Activated CD4-positive, alpha-beta T cell treated with anti-CD3 and anti-CD28 coated beads, Interleukin-2, amount 10 ng/mL, durations not matched to agents 24 days and 14 days (primary cell): ENCODE measurements at regions of chr6 and their contacts with region 1.

Region 1: GRCh38 chr6:160462551-160463109 is 114.5 kb downstream of the SLC22A3 start:
- DNase-seq: peak; percentile 94
- H3K4me3 Mint-ChIP-seq: peak overlapping the region; percentile 72
- H3K27ac Mint-ChIP-seq: peak overlapping the region; percentile 74
- H3K4me1 Mint-ChIP-seq: peaks cover 56% of the 10 kb centered on the region
- H3K27me3 Mint-ChIP-seq: peaks cover 27% of the 10 kb centered on the region

Region 2: DNA sequence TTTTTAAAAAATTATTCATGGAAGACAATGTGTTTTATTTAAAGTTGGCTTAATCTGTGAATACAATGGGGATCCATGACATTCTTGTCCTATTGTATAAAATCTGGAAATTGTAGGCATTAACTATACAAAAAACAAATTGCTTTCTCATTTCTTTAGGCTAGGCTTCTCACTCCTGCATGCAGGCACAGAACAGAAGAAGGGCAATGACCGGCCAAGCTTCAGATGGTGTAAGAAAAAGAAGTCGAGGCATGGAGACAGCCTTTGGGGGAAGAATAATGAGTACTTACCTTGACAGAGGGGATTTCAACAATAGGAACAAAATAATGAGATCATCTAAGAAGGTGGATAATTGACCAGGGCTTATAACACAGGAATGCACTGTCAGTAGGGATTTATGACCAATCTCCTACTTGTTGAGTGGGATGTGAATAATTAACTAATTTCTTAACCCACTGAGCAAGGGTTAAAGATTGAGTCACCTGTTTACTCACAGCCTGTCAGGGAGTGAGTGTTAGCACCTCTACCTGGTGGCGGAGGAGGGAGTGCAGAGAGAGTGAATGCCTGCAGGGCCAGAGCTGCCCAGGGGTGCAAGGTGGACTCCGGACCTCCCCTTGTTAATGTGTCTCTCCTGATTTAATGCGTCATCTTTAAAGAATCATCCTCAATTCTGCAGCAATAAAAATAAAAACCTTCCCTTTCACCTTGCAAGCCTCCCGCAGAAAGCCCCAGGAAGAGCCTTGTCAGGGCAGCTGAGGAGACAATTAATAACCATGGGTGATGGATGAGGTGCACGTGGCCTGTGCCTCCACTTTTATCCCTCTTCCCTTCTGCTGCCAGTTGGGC is 207.9 kb before region 1 on chr6:
- intact Hi-C with region 1: no loop called
- DNase-seq: no peak
- H3K4me3 Mint-ChIP-seq: no peak overlapping the region
- H3K27ac Mint-ChIP-seq: no peak overlapping the region
- H3K4me1 Mint-ChIP-seq: peaks cover 2% of the 10 kb centered on the region
- H3K27me3 Mint-ChIP-seq: peaks cover 4% of the 10 kb centered on the region

Region 3: DNA sequence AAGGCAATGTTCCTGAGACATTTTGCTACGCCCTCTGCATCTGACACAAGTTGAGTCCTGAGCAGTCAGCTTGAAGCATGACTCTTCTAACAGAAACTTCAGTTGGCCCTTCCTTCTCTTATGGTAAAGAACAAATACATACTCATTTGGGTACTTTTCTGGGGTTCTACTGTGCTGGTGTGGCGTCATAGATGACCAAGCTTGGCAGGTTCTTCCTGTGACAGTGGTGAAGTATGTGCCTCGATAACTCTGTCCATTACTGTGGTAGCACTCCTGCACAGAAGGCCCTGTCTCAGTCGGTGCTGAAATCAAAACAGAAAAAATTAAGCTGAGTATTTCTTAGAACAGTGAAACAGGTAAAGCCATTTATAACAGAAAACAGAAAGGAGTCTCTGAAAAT is 38.0 kb after region 1 on chr6:
- intact Hi-C with region 1: loop called (anchors 1 kb)
- DNase-seq: peak; percentile 58
- H3K4me3 Mint-ChIP-seq: no peak overlapping the region
- H3K27ac Mint-ChIP-seq: peak overlapping the region; percentile 52
- H3K4me1 Mint-ChIP-seq: peaks cover 1% of the 10 kb centered on the region
- H3K27me3 Mint-ChIP-seq: peaks cover 18% of the 10 kb centered on the region

Region 4: DNA sequence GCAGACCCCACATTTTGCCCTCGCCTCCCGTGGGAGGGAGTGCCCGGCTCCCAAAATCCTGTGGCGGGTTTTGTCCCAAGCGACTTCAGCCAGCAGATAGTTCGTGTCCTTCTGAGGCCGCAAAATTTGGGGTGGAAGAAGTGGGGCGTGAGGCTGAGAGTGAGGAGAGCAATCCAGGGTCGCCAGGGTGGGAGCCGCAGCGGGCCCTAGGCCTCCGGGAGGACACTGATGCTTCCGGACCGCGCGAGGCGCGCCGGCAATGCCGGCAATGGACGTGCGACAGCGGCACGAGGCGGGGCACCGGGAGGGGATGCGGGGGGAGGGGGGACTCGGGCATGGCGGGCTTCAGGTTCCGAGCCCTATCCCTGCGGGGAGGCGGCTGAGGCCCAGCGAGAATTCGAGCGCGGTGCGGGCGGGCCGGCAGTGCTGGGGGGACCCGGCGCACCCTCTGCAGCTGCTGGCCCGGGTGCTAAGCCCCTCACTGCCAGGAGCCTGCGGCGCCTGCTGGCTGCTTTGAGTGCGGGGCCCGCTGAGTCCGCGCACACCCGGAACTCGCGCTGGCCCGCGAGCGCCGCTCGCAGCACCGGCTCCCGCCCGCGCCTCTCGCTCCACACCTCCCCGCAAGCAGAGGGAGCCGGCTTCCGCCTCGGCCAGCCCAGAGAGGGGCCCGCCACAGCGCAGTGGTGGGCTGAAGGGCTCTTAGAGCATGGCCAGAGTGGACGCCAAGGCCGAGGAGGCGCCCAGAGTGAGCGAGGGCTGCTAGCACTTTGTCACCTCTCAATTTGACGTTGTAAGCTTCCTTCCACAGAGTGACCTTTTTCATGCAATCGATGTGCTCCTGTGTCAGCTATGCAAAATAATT is 57.6 kb after region 1 on chr6:
- intact Hi-C with region 1: loop called (anchors 1 kb)
- DNase-seq: peak; percentile 93
- H3K4me3 Mint-ChIP-seq: peak overlapping the region; percentile 89
- H3K27ac Mint-ChIP-seq: peak overlapping the region; percentile 88
- H3K4me1 Mint-ChIP-seq: peaks cover 28% of the 10 kb centered on the region
- H3K27me3 Mint-ChIP-seq: peaks cover 51% of the 10 kb centered on the region